ENCODE measurements at regions of chr4 and their contacts with region 1.

Region 1: GRCh38 chr4:110193822-110194761 is 4.3 kb downstream of the ELOVL6 start:
- DNase-seq: peak; percentile 92
- H3K4me3 ChIP-seq: peak overlapping the region; percentile 80
- H3K27ac ChIP-seq: peak overlapping the region; percentile 84
- H3K4me1 ChIP-seq: peaks cover 34% of the 10 kb centered on the region
- CTCF ChIP-seq: no peak

Region 2: DNA sequence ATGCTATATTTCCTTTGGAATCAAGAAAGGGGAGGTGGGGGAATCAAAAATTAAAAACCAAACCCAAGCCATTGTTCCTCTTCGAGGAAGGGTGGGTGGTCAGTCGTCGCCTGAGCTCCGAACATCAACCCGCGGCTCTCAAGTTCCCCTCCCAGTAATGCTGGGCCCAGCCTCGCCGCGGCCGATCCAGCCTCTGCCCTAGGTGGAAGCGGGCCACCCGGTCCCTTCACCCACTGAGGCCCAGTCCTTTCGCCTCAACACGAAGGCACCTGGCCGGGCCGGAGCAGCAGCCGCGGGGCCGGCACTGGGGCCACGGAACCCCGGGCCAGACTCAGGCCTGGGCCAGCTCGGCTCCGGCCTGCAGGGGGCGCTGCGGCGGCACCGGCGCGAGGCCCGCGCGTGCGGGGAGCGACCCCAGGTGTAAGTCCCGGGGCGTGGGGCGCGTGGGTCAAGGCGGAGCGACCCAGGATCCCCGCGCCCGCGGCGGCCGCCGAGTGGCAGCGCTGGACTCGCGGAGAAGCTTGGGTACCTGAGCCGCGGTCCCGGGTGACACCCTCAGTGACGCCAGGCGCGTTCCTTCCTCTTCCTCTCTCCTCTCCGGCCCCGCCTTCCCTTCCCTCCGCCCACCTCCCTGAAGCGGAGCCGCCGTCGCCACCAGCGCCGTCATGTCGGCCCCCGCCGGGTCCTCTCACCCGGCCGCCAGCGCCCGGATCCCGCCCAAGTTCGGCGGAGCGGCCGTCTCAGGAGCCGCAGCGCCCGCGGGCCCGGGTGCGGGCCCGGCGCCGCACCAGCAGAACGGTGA is 760.7 kb before region 1 on chr4 and contains the start of gene SEC24B:
- CTCF ChIA-PET with region 1: no interaction called
- POLR2A ChIA-PET with region 1: no interaction called
- intact Hi-C with region 1: loop called (anchors 5 kb)
- DNase-seq: peak; percentile 89
- H3K4me3 ChIP-seq: peak within 1 kb of the TSS; percentile 93
- H3K27ac ChIP-seq: peak within 1 kb of the TSS; percentile 28
- H3K4me1 ChIP-seq: peaks cover 22% of the 10 kb centered on the region
- CTCF ChIP-seq: peak; percentile 85
- total RNA-seq, gene SEC24B: 8.7 and 13.1 TPM in 2 replicates

Region 3: GRCh38 chr4:109665783-109666485 is 528.2 kb before region 1 on chr4:
- CTCF ChIA-PET with region 1: no interaction called
- POLR2A ChIA-PET with region 1: no interaction called
- intact Hi-C with region 1: no loop called
- DNase-seq: no peak
- H3K4me3 ChIP-seq: no peak overlapping the region
- H3K27ac ChIP-seq: no peak overlapping the region
- H3K4me1 ChIP-seq: no peaks in the 10 kb centered on the region
- CTCF ChIP-seq: no peak

Region 4: GRCh38 chr4:109702950-109703663 is 491.0 kb before region 1 on chr4 and contains the start of gene CASP6:
- CTCF ChIA-PET with region 1: no interaction called
- POLR2A ChIA-PET with region 1: no interaction called
- intact Hi-C with region 1: loop called (anchors 10 kb)
- DNase-seq: peak; percentile 80
- H3K4me3 ChIP-seq: peak within 1 kb of the TSS; percentile 75
- H3K27ac ChIP-seq: no peak within 1 kb of the TSS
- H3K4me1 ChIP-seq: peaks cover 18% of the 10 kb centered on the region
- CTCF ChIP-seq: peak; percentile 75
- total RNA-seq, gene CASP6: 8.1 and 10.1 TPM in 2 replicates

Region 5: DNA sequence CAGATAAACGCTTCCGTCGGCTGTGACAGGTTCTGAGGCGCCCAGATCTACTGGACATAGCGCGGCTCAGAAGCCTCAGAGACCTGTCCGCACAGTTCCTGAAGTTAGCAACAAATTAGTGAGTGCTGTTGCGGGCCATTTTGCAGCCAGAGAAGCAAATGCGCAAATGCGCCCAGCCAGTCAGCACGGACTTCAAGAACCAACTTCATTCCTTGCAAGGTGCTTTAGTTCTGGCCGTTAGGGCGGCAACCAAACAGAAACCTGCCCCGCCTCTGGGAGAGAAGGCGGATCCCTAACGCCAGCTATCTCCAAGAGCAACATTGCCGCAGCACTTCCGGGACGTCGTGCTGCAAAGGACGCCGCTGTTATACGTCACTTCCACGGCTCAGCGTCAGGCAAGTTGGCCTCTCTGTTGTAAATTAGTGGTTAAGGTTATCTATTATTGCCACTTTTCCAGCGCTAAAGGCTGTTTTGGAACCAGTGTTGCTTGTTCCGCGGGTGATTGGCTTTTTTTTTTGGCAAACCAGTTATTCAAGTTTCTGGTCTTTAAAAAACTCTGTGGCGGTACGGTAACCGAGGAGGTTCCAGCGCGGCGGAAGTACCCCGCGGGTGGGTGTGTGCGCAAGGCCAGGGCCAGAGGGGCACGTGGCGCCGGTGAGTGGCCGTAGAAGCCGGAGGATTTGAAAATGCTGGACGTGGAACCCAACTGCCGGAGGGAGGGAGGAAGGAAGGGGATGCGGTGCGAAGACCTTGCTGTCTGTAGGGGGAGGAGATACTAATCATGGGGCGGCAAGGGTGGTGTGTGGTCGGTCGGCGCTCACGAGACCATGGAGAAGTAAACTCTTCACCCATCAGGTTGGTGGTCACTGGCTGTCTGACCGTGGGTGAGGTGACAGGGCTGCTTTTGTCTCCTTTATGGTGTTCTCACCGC is 378.7 kb before region 1 on chr4 and contains the start of gene GAR1:
- CTCF ChIA-PET with region 1: no interaction called
- POLR2A ChIA-PET with region 1: no interaction called
- intact Hi-C with region 1: loop called (anchors 10 kb)
- DNase-seq: peak; percentile 95
- H3K4me3 ChIP-seq: peak within 1 kb of the TSS; percentile 83
- H3K27ac ChIP-seq: peak within 1 kb of the TSS; percentile 65
- H3K4me1 ChIP-seq: peaks cover 22% of the 10 kb centered on the region
- CTCF ChIP-seq: no peak
- total RNA-seq, gene GAR1: 16.4 and 26.7 TPM in 2 replicates

Region 6: GRCh38 chr4:109990261-109991257 is 203.5 kb before region 1 on chr4:
- CTCF ChIA-PET with region 1: no interaction called
- POLR2A ChIA-PET with region 1: interaction called, 7 read pairs
- intact Hi-C with region 1: loop called (anchors 2 kb)
- DNase-seq: peak; percentile 95
- H3K4me3 ChIP-seq: peak overlapping the region; percentile 17
- H3K27ac ChIP-seq: peak overlapping the region; percentile 97
- H3K4me1 ChIP-seq: peaks cover 88% of the 10 kb centered on the region
- CTCF ChIP-seq: no peak

Region 7: DNA sequence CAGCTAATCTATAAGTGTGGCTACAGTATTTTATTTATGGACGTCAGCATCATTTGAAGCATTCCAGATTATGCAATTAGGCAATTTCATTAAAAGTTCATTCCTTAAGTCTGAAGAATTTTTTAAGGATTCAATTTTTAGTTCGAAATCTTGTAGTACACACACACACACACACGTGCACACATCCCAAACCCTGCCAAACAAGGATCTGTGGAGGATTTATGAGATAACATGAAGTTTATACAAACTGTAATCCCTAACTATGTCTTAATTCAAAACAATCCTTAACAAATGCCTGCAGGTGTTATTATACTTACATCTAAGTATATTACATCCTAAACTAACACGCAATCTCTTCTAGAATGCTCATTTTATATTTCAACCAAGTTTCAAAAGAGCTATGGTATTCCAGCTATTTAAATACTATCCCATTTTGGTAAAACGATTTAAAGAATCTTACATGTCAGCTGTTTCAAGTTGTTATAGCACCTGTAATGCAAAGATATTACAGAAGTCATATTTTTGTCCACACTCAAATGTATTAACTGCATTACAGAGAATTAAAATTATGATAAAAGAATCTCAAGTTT is 101.4 kb before region 1 on chr4:
- CTCF ChIA-PET with region 1: no interaction called
- POLR2A ChIA-PET with region 1: no interaction called
- intact Hi-C with region 1: no loop called
- DNase-seq: no peak
- H3K4me3 ChIP-seq: no peak overlapping the region
- H3K27ac ChIP-seq: no peak overlapping the region
- H3K4me1 ChIP-seq: peaks cover 15% of the 10 kb centered on the region
- CTCF ChIP-seq: no peak

Region 8: GRCh38 chr4:110287130-110287529 is 93.0 kb after region 1 on chr4:
- CTCF ChIA-PET with region 1: no interaction called
- POLR2A ChIA-PET with region 1: no interaction called
- intact Hi-C with region 1: no loop called
- DNase-seq: no peak
- H3K4me3 ChIP-seq: no peak overlapping the region
- H3K27ac ChIP-seq: no peak overlapping the region
- H3K4me1 ChIP-seq: no peaks in the 10 kb centered on the region
- CTCF ChIP-seq: no peak

Region 9: GRCh38 chr4:110516106-110516922 is 322.2 kb after region 1 on chr4:
- CTCF ChIA-PET with region 1: no interaction called
- POLR2A ChIA-PET with region 1: no interaction called
- intact Hi-C with region 1: loop called (anchors 10 kb)
- DNase-seq: peak; percentile 78
- H3K4me3 ChIP-seq: peak overlapping the region; percentile 67
- H3K27ac ChIP-seq: no peak overlapping the region
- H3K4me1 ChIP-seq: peaks cover 8% of the 10 kb centered on the region
- CTCF ChIP-seq: peak; percentile 88

Region 10: GRCh38 chr4:110704748-110705439 is 510.8 kb after region 1 on chr4:
- CTCF ChIA-PET with region 1: no interaction called
- POLR2A ChIA-PET with region 1: no interaction called
- intact Hi-C with region 1: loop called (anchors 10 kb)
- DNase-seq: peak; percentile 87
- H3K4me3 ChIP-seq: peak overlapping the region; percentile 55
- H3K27ac ChIP-seq: peak overlapping the region; percentile 95
- H3K4me1 ChIP-seq: peaks cover 67% of the 10 kb centered on the region
- CTCF ChIP-seq: no peak

Region 11: GRCh38 chr4:110963662-110964280 is 769.7 kb after region 1 on chr4:
- CTCF ChIA-PET with region 1: no interaction called
- POLR2A ChIA-PET with region 1: no interaction called
- intact Hi-C with region 1: no loop called
- DNase-seq: no peak
- H3K4me3 ChIP-seq: no peak overlapping the region
- H3K27ac ChIP-seq: no peak overlapping the region
- H3K4me1 ChIP-seq: no peaks in the 10 kb centered on the region
- CTCF ChIP-seq: no peak